H1 (cell line): ENCODE measurements at regions of chr13 and their contacts with region 1.

Region 1: GRCh38 chr13:33931397-33932311 is 113.7 kb downstream of the RFC3 start:
- DNase-seq: no peak
- H3K4me3 ChIP-seq: no peak overlapping the region
- H3K27ac ChIP-seq: no peak overlapping the region
- H3K4me1 ChIP-seq: peaks cover 4 to 7% (median 5%) of the 10 kb centered on the region in 4 experiments
- H3K27me3 ChIP-seq: no peaks in the 10 kb centered on the region
- CTCF ChIP-seq: peak in 2 of 3 experiments; percentile 43 to 58; a peak in 2 of 4 replicates
- EP300 ChIP-seq: no peak
- POLR2A ChIP-seq: no peak
- RAD21 ChIP-seq: peak; percentile 84 to 86

Region 2: DNA sequence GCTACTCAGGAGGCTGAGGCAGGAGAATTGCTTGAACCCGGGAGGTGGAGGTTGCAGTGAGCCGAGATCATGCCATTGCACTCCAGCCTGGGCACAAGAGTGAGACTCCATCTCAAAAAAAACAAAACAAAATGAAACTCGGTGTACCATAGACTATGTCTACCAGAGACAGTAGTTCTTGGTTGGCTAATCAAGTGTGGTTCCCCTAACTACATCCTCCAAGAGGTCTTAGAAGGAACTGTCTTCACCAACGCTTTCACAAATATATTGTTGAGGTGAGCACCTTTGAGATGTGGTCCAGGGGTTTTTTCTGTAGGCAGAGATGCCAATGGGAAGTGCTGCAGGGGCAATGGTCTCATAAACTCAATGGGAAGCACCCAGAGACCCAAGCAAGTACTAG is 65.7 kb before region 1 on chr13:
- CTCF ChIA-PET with region 1: no interaction called
- POLR2A ChIA-PET with region 1: no interaction called
- DNase-seq: no peak
- H3K4me3 ChIP-seq: no peak overlapping the region
- H3K27ac ChIP-seq: no peak overlapping the region
- H3K4me1 ChIP-seq: no peaks in the 10 kb centered on the region
- H3K27me3 ChIP-seq: no peaks in the 10 kb centered on the region
- CTCF ChIP-seq: no peak
- EP300 ChIP-seq: no peak
- POLR2A ChIP-seq: no peak
- RAD21 ChIP-seq: no peak

Region 3: GRCh38 chr13:34076943-34077703 is 145.5 kb after region 1 on chr13:
- CTCF ChIA-PET with region 1: interaction called, 58 read pairs
- POLR2A ChIA-PET with region 1: no interaction called
- DNase-seq: no peak
- H3K4me3 ChIP-seq: no peak overlapping the region
- H3K27ac ChIP-seq: no peak overlapping the region
- H3K4me1 ChIP-seq: 0 out of 7 replicates have a peak, but pooled peaks cover 0 to 2% (median 0%) of the 10 kb centered on the region in 4 experiments
- H3K27me3 ChIP-seq: no peaks in the 10 kb centered on the region
- CTCF ChIP-seq: peak in 2 of 3 experiments; percentile 33 to 51; a peak in 2 of 4 replicates
- EP300 ChIP-seq: no peak
- POLR2A ChIP-seq: no peak
- RAD21 ChIP-seq: peak; percentile 77 to 80